Gastrocnemius medialis (tissue), 4 donors: ENCODE measurements at regions of chr1 and their contacts with region 1.

Region 1: GRCh38 chr1:212162635-212163034 is 122.6 kb upstream of the PPP2R5A start:
- DNase-seq: peak; percentile 61 to 67
- ATAC-seq: peak; percentile 73 to 76
- H3K4me3 ChIP-seq: no peak overlapping the region
- H3K27ac ChIP-seq: peak overlapping the region; percentile 68 to 84 (median 76)
- H3K4me1 ChIP-seq: peaks cover 9 to 41% of the 10 kb centered on the region in 2 donors
- H3K27me3 ChIP-seq: no peaks in the 10 kb centered on the region
- CTCF ChIP-seq: no peak
- POLR2A ChIP-seq: no peak

Region 2: DNA sequence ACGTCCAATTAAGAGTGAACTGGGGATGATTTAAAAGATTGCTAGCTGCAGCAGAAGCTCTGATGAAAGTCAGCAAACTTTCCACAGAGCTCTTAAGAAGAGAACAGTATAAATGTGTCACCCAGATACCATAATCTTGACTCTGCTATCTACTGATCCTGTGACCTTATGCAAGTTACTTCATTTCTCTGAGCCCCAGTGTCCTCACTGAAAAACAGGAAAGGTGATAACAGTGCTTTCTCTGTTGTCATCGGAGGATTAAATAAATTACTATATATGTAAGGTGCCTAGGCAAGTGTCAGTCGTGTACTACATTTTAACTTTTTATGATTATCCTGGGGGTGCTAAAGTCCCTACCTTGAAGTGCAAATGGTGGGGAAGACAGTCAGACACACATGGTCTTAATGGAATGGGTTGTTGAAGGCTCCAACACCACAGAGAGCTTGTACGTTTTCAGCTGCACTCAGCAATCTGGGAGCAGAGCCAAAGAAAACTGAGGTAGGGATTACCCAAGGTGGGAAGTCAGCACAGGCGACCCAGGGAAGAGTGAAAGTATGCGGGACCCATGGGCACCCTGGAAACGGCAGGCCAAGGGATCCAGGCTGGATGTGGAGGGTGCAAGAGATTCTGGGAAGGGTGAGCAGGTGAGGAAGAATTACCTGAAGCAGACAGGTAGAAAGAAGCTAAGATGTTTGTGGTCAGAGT is 44.3 kb before region 1 on chr1:
- in situ Hi-C with region 1: no loop called
- intact Hi-C with region 1: loop called (anchors 5 kb)
- DNase-seq: no peak
- ATAC-seq: no peak
- H3K4me3 ChIP-seq: no peak overlapping the region
- H3K27ac ChIP-seq: peak overlapping the region; percentile 84 to 94 (median 88)
- H3K4me1 ChIP-seq: peaks cover 30 to 38% of the 10 kb centered on the region in 2 donors
- H3K27me3 ChIP-seq: no peaks in the 10 kb centered on the region
- CTCF ChIP-seq: no peak
- POLR2A ChIP-seq: no peak

Region 3: DNA sequence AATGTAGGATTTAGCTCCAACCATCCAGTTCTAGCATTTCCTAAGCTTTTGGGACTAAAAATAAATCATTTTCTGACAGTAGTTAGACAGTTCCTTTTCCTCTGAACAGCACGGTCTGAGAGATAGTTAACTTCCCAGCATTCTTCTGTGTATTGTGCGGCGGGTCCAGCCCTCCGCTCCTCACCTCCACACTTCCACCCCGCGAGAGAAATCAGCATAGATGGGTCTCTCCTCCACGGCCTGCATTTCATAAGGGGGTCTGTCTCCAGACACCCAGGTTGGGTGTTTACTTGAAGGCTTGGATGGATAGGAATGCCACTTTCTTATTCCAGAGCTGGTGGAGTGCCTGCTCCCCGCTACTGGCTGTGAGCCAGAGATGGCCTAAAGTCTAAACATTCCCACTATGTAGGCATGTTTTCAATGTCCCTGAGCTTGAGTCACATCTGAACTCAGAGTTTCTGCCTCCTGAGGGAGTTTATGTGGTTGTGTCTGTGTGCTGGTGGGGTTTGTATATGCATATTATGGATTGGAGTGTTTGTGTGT is 84.6 kb after region 1 on chr1:
- in situ Hi-C with region 1: no loop called
- intact Hi-C with region 1: loop called (anchors 10 kb)
- DNase-seq: no peak
- ATAC-seq: peak in 1 of 2 donors; percentile 20
- H3K4me3 ChIP-seq: no peak overlapping the region
- H3K27ac ChIP-seq: peak overlapping the region in 1 of 4 donors; percentile 6
- H3K4me1 ChIP-seq: peaks cover 0 to 11% of the 10 kb centered on the region in 2 donors
- H3K27me3 ChIP-seq: no peaks in the 10 kb centered on the region
- CTCF ChIP-seq: no peak
- POLR2A ChIP-seq: no peak